ENCODE measurements at regions of chr12 and their contacts with region 1.

Region 1: DNA sequence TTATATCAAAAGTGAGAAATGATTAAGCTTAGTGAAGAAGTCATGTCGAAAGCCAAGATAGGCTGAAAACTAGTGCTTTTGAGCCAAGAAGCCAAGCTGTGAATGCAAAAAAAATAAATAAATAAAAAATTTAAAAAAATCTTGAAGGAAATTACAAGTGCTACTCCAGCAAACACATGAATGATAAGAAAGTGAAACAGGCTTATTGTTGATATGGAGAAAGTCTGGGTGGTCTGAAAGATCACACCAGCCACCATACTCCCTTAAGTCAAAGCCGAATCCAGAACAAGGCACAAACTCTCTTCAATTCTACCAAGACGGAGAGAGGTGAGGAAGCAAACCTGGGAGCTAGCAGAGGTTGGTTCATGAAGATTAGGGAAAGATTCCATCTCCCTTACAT is 49.7 kb downstream of the MED13L start:
- DNase-seq: no peak
- ATAC-seq: no peak
- H3K4me3 ChIP-seq: no peak overlapping the region
- H3K4me3 Mint-ChIP-seq: no peak overlapping the region
- H3K27ac ChIP-seq: no peak overlapping the region
- H3K27ac Mint-ChIP-seq: no peak overlapping the region
- H3K4me1 ChIP-seq: no peaks in the 10 kb centered on the region
- H3K4me1 Mint-ChIP-seq: peaks cover 31 to 38% (median 36%) of the 10 kb centered on the region in 3 donors
- H3K27me3 ChIP-seq: no peaks in the 10 kb centered on the region
- H3K27me3 Mint-ChIP-seq: no peaks in the 10 kb centered on the region

Region 2: DNA sequence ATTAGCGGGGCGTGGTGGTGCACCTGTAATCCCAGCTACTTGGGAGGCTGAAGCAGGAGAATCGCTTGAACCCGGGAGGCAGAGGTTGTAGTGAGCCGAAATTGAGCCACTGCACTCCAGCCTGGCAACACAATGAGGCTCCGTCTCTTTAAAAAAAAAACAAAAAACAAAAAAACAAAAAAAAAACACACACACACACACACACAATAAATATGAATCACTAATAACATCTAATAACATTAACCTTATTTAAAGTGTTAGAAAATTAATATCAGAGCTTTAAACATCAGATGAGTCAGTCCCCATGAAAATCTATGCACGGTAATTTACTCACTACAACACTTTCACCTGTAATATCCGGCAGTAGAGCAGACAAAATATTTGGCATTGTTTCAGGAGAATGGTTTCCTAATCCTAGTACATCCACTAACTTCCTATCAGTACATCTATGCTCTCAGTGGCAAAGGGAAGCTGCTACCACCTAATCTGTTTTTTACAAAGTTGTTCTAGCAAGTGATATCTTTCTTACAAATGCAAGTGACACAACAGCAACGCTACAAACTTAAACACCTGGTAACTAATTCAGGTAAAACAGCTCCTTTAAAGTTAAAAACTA is 13.5 kb after region 1 on chr12:
- CTCF ChIA-PET with region 1: interaction called, 3 to 16 read pairs
- POLR2A ChIA-PET with region 1: interaction called, 10 to 17 read pairs
- DNase-seq: no peak
- ATAC-seq: no peak
- H3K4me3 ChIP-seq: no peak overlapping the region
- H3K4me3 Mint-ChIP-seq: no peak overlapping the region
- H3K27ac ChIP-seq: no peak overlapping the region
- H3K27ac Mint-ChIP-seq: no peak overlapping the region
- H3K4me1 ChIP-seq: peaks cover 11 to 19% of the 10 kb centered on the region in 2 experiments
- H3K4me1 Mint-ChIP-seq: peaks cover 77 to 80% (median 77%) of the 10 kb centered on the region in 3 donors
- H3K27me3 ChIP-seq: no peaks in the 10 kb centered on the region
- H3K27me3 Mint-ChIP-seq: no peaks in the 10 kb centered on the region

Region 3: GRCh38 chr12:116406516-116406915 is 178.7 kb after region 1 on chr12:
- CTCF ChIA-PET with region 1: no interaction called
- POLR2A ChIA-PET with region 1: no interaction called
- DNase-seq: peak in 3 of 35 experiments; percentile 6 to 18 (median 7)
- ATAC-seq: no peak
- H3K4me3 ChIP-seq: no peak overlapping the region
- H3K4me3 Mint-ChIP-seq: no peak overlapping the region
- H3K27ac ChIP-seq: no peak overlapping the region
- H3K27ac Mint-ChIP-seq: no peak overlapping the region
- H3K4me1 ChIP-seq: peaks cover 0 to 4% of the 10 kb centered on the region in 2 experiments
- H3K4me1 Mint-ChIP-seq: peaks cover 3 to 14% (median 6%) of the 10 kb centered on the region in 3 donors
- H3K27me3 ChIP-seq: no peaks in the 10 kb centered on the region
- H3K27me3 Mint-ChIP-seq: no peaks in the 10 kb centered on the region

Measured in T-cell (primary cell).